ENCODE measurements at regions of chr6 and their contacts with region 1.

Region 1: GRCh38 chr6:37812841-37813240 is 6.7 kb upstream of the ZFAND3 start:
- DNase-seq: no peak
- ATAC-seq: no peak
- H3K4me3 ChIP-seq: no peak overlapping the region
- H3K4me3 Mint-ChIP-seq: no peak overlapping the region
- H3K27ac ChIP-seq: no peak overlapping the region
- H3K27ac Mint-ChIP-seq: no peak overlapping the region
- H3K4me1 ChIP-seq: peaks cover under 1% of the 10 kb centered on the region
- H3K4me1 Mint-ChIP-seq: peaks cover 10% of the 10 kb centered on the region
- H3K27me3 ChIP-seq: peaks cover 0 to 2% of the 10 kb centered on the region in 2 experiments
- H3K27me3 Mint-ChIP-seq: peaks cover 10% of the 10 kb centered on the region
- CTCF ChIP-seq: no peak

Region 2: DNA sequence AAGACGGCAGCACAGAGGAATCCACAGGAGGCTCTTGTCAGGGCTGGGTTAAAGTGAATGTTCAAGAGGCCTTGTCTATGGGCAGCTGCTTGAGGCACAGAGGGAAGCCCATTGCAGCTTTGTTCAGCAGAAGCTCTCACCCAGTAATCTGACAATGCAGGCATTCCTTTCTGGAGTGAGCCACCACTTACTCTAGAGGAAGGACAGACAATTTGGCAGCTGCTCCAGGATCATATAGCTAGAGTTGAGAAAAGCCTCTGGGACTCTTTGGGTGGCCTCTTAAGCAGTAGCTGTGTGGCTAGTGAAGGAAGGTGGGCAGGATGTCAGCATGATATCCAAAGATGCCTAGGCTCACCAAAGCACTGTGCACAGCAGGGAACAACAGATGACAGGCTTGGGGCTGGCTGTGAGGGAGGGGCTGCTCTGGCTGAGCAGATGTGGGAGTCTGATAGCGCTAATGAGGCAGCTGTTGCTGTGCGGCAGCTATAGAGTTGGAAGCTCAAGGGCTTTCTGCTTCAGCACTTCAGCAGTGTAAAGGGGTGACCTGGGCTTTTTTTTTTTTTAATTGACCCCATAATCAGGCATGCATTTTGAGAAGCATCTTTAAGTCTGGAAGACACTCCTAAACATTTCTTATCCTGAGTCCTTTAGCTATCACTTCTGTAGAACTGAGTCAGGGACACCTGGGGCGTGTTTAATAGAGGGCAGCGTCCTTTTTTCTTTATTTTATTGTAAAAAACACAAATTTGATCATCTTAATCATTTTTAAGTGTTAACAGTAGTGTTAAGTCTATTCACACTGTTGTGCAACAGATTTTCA is 352.6 kb before region 1 on chr6:
- CTCF ChIA-PET with region 1: no interaction called
- POLR2A ChIA-PET with region 1: no interaction called
- intact Hi-C with region 1: no loop called
- DNase-seq: no peak
- ATAC-seq: no peak
- H3K4me3 ChIP-seq: no peak overlapping the region
- H3K4me3 Mint-ChIP-seq: no peak overlapping the region
- H3K27ac ChIP-seq: no peak overlapping the region
- H3K27ac Mint-ChIP-seq: no peak overlapping the region
- H3K4me1 ChIP-seq: no peaks in the 10 kb centered on the region
- H3K4me1 Mint-ChIP-seq: no peaks in the 10 kb centered on the region
- H3K27me3 ChIP-seq: no peaks in the 10 kb centered on the region
- H3K27me3 Mint-ChIP-seq: no peaks in the 10 kb centered on the region
- CTCF ChIP-seq: no peak

Region 3: DNA sequence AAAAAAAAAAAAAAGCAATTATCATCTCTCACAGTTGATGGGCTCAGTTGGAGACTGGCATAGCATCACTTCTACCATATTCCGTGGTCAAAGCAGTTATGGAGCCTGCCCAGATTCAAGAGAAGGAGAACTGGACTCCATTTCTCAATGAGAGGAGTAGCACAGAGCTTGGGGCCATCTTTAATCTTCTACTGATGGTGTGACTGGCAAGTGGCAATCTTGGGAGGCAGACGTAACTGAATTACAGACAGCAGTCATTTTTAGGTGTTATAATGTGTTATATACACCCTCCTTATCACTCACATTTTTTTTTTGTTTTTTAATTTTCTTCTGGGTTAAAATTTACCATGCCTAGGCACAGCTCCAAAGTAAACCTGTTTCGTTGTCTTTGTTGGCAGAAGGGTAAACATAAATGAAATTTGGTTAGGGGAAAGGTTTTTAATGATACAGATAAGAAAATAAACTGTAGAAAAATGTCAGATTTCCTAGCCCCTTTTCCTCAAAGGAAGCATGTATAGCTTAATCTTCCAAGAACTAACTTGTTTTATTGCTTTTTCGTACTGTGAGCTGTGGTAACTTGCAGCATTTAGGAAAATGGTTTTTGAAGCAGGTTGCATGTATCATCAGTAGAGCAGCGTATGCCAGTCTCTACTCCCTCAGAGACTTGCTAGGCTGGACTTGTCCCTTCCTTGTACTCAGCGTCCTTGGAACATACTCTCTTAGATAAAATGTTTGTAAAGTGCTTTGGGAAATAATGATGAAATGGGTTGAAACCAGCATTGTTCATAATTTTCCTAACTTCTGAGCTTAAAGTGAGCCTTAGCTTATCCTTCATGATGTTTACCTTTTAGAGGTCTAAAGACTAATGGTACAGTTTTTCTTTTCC is 32.4 kb after region 1 on chr6:
- CTCF ChIA-PET with region 1: no interaction called
- POLR2A ChIA-PET with region 1: interaction called, 3 read pairs
- intact Hi-C with region 1: loop called in 1 of 2 experiments (anchors 5 kb)
- DNase-seq: no peak
- ATAC-seq: no peak
- H3K4me3 ChIP-seq: no peak overlapping the region
- H3K4me3 Mint-ChIP-seq: no peak overlapping the region
- H3K27ac ChIP-seq: no peak overlapping the region
- H3K27ac Mint-ChIP-seq: peak overlapping the region; percentile 16
- H3K4me1 ChIP-seq: peaks cover 37% of the 10 kb centered on the region
- H3K4me1 Mint-ChIP-seq: peaks cover 75% of the 10 kb centered on the region
- H3K27me3 ChIP-seq: no peaks in the 10 kb centered on the region
- H3K27me3 Mint-ChIP-seq: no peaks in the 10 kb centered on the region
- CTCF ChIP-seq: no peak